ENCODE measurements at regions of chr7 and their contacts with region 1.

Region 1: DNA sequence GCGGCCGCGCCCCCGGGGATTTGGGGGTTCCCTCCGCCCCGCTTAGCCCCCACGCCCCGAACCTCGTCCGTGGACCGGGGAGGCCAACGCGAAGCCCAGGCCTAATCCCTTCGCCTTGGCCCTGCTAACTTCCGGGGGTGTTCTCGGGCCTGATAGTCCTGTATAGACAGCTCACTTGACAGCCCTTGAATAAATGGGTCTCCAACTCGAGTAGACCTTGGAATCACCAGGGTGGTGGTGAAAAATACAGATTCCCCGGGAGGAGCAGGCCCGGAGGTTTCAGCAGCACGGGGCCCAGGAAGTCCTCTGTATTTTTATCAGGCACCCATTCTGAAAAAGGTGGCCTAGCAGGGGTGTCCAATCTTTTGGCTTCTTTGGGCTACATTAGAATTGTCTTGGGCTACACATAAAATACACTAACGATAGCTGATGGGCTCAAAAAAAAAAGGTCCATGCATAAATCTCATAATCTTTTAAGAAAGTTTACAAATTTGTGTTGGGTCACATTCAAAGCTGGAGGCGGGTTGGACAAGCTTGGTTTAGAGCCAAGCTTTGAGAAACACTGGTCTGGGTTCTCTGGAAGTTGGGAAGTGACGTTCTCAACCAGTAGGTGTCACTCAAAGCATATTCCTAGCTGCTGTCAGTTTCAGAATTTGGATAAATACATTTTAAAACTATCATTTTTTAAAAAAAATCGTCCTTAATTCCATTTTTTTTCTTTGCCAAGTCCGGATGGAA is 221.7 kb downstream of the PHTF2 start:
- DNase-seq: peak in 4 of 5 donors; percentile 41 to 69 (median 56)
- ATAC-seq: peak; percentile 66 to 84 (median 76)
- H3K4me3 ChIP-seq: peak overlapping the region; percentile 32 to 71 (median 56)
- H3K27ac ChIP-seq: peak overlapping the region; percentile 81 to 98 (median 95)
- H3K4me1 ChIP-seq: peaks cover 0 to 42% (median 21%) of the 10 kb centered on the region in 12 donors
- H3K27me3 ChIP-seq: peaks cover 0 to 7% (median 0%) of the 10 kb centered on the region in 9 donors
- CTCF ChIP-seq: peak; percentile 61 to 95 (median 80)
- POLR2A ChIP-seq: no peak

Region 2: GRCh38 chr7:77657427-77658224 is 362.7 kb before region 1 on chr7:
- intact Hi-C with region 1: loop called in 1 of 10 experiments (anchors 10 kb)
- DNase-seq: no peak
- ATAC-seq: peak in 1 of 4 donors; percentile 32
- H3K4me3 ChIP-seq: no peak overlapping the region
- H3K27ac ChIP-seq: no peak overlapping the region
- H3K4me1 ChIP-seq: peaks cover 0 to 3% (median 0%) of the 10 kb centered on the region in 12 donors
- H3K27me3 ChIP-seq: no peaks in the 10 kb centered on the region
- CTCF ChIP-seq: peak; percentile 19 to 60 (median 46)
- POLR2A ChIP-seq: no peak

Region 3: GRCh38 chr7:77798394-77799077 is 221.8 kb before region 1 on chr7 and contains the starts of genes PHTF2 and TMEM60:
- intact Hi-C with region 1: loop called in 1 of 10 experiments (anchors 5 kb)
- DNase-seq: peak; percentile 98 to 99 (median 99)
- ATAC-seq: peak; percentile 96 to 98 (median 98)
- H3K4me3 ChIP-seq: peak within 1 kb of the TSS; percentile 65 to 98 (median 88)
- H3K27ac ChIP-seq: peak within 1 kb of the TSS; percentile 70 to 92 (median 88)
- H3K4me1 ChIP-seq: peaks cover 0 to 80% (median 26%) of the 10 kb centered on the region in 12 donors
- H3K27me3 ChIP-seq: no peaks in the 10 kb centered on the region
- CTCF ChIP-seq: peak; percentile 15 to 70 (median 38)
- POLR2A ChIP-seq: peak in 1 of 2 donors; percentile 72
- total RNA-seq, gene PHTF2: 20.5 to 47.2 (median 24.2) TPM
- total RNA-seq, gene TMEM60: 5.4 to 13.2 (median 8.2) TPM

Region 4: GRCh38 chr7:77940647-77941046 is 79.7 kb before region 1 on chr7:
- intact Hi-C with region 1: loop called in 1 of 10 experiments (anchors 5 kb)
- DNase-seq: no peak
- ATAC-seq: no peak
- H3K4me3 ChIP-seq: no peak overlapping the region
- H3K27ac ChIP-seq: no peak overlapping the region
- H3K4me1 ChIP-seq: peaks cover 0 to 2% (median 0%) of the 10 kb centered on the region in 12 donors
- H3K27me3 ChIP-seq: no peaks in the 10 kb centered on the region
- CTCF ChIP-seq: peak; percentile 25 to 78 (median 61)
- POLR2A ChIP-seq: no peak

Region 5: GRCh38 chr7:78039790-78040776 is 19.8 kb after region 1 on chr7:
- intact Hi-C with region 1: loop called in 1 of 10 experiments (anchors 1 kb)
- DNase-seq: peak in 4 of 5 donors; percentile 10 to 71 (median 31)
- ATAC-seq: peak in 3 of 4 donors; percentile 50 to 75 (median 69)
- H3K4me3 ChIP-seq: no peak overlapping the region
- H3K27ac ChIP-seq: no peak overlapping the region
- H3K4me1 ChIP-seq: peaks cover 0 to 6% (median 0%) of the 10 kb centered on the region in 12 donors
- H3K27me3 ChIP-seq: no peaks in the 10 kb centered on the region
- CTCF ChIP-seq: peak; percentile 55 to 78 (median 64)
- POLR2A ChIP-seq: no peak

Region 6: GRCh38 chr7:78226059-78226719 is 205.9 kb after region 1 on chr7:
- intact Hi-C with region 1: loop called in 2 of 10 experiments (anchors 5 to 10 kb)
- DNase-seq: peak in 3 of 5 donors; percentile 27 to 44 (median 29)
- ATAC-seq: no peak
- H3K4me3 ChIP-seq: no peak overlapping the region
- H3K27ac ChIP-seq: no peak overlapping the region
- H3K4me1 ChIP-seq: peaks cover 0 to 6% (median 0%) of the 10 kb centered on the region in 12 donors
- H3K27me3 ChIP-seq: no peaks in the 10 kb centered on the region
- CTCF ChIP-seq: peak in 11 of 12 donors; percentile 7 to 53 (median 32)
- POLR2A ChIP-seq: no peak

Region 7: GRCh38 chr7:79176859-79177477 is 1156.7 kb after region 1 on chr7:
- intact Hi-C with region 1: loop called in 3 of 10 experiments (anchors 5 to 10 kb)
- DNase-seq: no peak
- ATAC-seq: peak in 1 of 4 donors; percentile 63
- H3K4me3 ChIP-seq: no peak overlapping the region
- H3K27ac ChIP-seq: no peak overlapping the region
- H3K4me1 ChIP-seq: no peaks in the 10 kb centered on the region
- H3K27me3 ChIP-seq: no peaks in the 10 kb centered on the region
- CTCF ChIP-seq: peak; percentile 8 to 74 (median 54)
- POLR2A ChIP-seq: no peak

Measured in heart left ventricle (tissue), 16 donors.